Heart right ventricle (tissue), 16 donors: ENCODE measurements at regions of chr1 and their contacts with region 1.

Region 1: GRCh38 chr1:206635080-206635977 is at the start of gene DYRK3:
- DNase-seq: peak; percentile 94 to 97
- ATAC-seq: peak; percentile 98 to 99 (median 98)
- H3K4me3 ChIP-seq: peak within 1 kb of the TSS; percentile 77 to 98 (median 94)
- H3K27ac ChIP-seq: peak within 1 kb of the TSS; percentile 66 to 94 (median 89)
- H3K4me1 ChIP-seq: peaks cover 0 to 62% (median 30%) of the 10 kb centered on the region in 9 donors
- H3K27me3 ChIP-seq: peaks cover 0 to 10% (median 0%) of the 10 kb centered on the region in 7 donors
- CTCF ChIP-seq: peak in 2 of 9 donors; percentile 40
- total RNA-seq, gene DYRK3: 10.4 to 27.9 (median 20.8) TPM

Region 2: GRCh38 chr1:206663832-206664652 is 28.7 kb after region 1 on chr1:
- intact Hi-C with region 1: loop called in 9 of 10 experiments (anchors 1 to 5 kb)
- DNase-seq: peak; percentile 63 to 77
- ATAC-seq: peak; percentile 64 to 80 (median 77)
- H3K4me3 ChIP-seq: peak overlapping the region in 7 of 10 donors; percentile 6 to 39 (median 29)
- H3K27ac ChIP-seq: peak overlapping the region; percentile 71 to 96 (median 90)
- H3K4me1 ChIP-seq: peaks cover 3 to 76% (median 44%) of the 10 kb centered on the region in 9 donors
- H3K27me3 ChIP-seq: peaks cover 0 to 7% (median 0%) of the 10 kb centered on the region in 7 donors
- CTCF ChIP-seq: peak; percentile 78 to 89 (median 85)

Region 3: DNA sequence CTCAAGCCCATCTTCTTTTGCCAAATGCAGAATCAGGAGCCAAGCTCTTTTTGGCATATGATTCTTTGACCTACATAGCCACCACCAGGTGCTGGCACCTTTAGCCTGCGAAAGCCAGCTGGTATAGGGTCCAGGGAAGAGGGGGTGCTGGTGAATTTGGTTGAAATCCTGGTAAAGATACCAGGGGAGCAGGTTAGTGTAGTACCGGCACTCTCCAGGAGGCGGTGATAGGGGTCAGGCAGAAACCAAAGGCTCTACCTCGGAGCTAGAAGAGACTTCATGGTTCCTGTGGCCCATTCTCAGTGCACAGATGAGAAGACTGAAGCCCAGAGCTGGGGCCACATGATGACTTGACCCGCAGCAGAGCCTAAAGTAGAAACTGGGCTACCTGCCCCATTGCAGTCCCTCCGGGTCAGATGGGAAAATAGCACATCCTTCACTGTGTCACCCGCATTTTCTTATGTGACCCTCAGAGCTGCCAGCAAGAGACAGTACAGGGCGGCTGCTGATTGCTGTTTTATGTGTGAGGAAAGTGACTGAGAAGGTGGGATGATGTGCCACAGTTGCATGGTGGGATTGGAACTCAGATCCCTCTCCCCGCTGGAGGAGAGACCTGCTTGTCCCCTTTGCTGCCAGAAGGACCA is 99.3 kb after region 1 on chr1:
- intact Hi-C with region 1: loop called in 6 of 10 experiments (anchors 5 to 10 kb)
- DNase-seq: peak in 1 of 2 donors; percentile 37
- ATAC-seq: peak in 5 of 8 donors; percentile 14 to 31 (median 24)
- H3K4me3 ChIP-seq: no peak overlapping the region
- H3K27ac ChIP-seq: peak overlapping the region in 1 of 10 donors; percentile 70
- H3K4me1 ChIP-seq: peaks cover 10 to 65% (median 44%) of the 10 kb centered on the region in 9 donors
- H3K27me3 ChIP-seq: no peaks in the 10 kb centered on the region
- CTCF ChIP-seq: peak; percentile 42 to 79 (median 65)

Region 4: DNA sequence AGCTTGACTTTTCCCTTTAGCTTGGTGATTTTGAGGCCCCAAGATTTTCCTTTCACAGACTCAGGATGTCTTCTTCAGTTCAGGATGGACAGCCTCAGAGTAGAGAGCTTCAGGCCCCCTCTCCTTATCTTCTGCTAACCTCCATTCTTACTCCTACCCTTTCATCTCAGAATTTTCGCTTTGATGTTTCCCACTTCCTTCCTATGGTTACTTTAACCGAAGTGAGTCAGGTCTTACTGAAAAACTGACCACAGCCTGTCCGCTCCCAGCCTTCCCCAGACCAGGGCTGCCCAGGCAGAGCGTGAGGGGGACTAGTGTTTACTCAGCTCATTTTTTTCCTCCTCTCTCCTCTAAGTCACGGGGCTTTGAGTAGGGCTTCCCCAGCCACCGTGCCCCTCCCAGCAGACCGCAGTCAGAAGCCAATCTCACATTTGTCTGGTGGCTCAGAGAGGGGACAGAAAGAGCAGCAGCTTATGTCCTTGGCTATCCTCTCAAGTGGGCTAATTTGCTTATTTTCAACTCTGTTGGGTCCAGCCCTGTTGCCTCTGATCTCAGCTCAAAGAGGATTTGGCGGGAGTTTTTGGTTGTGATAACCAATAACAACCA is 131.0 kb after region 1 on chr1:
- intact Hi-C with region 1: no loop called
- DNase-seq: peak; percentile 11 to 23
- ATAC-seq: peak in 7 of 8 donors; percentile 52 to 79 (median 72)
- H3K4me3 ChIP-seq: no peak overlapping the region
- H3K27ac ChIP-seq: peak overlapping the region in 1 of 10 donors; percentile 28
- H3K4me1 ChIP-seq: peaks cover 0 to 63% (median 0%) of the 10 kb centered on the region in 9 donors
- H3K27me3 ChIP-seq: peaks cover 0 to 11% (median 0%) of the 10 kb centered on the region in 7 donors
- CTCF ChIP-seq: no peak

Region 5: DNA sequence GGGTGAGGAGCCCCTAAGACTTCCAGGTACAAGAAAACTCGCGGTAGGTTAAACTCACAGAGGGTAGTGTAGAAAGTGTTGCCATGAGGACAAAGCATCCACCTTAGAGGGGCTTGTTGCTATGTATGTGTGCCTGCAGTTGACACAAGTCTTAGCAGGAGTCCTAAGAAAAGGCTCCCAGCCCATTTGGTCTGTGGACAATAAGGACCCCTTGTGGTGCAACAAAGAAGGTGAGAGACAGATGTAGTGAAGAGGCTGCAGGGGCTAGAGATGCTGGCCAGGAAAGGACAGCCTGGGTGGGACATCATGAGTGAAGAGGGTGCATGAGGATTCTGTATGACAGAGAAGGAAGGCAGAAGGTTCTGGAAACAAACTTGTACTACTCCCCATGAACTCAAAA is 173.3 kb after region 1 on chr1:
- intact Hi-C with region 1: loop called in 9 of 10 experiments (anchors 2 to 5 kb)
- DNase-seq: peak in 1 of 2 donors; percentile 34
- ATAC-seq: peak in 7 of 8 donors; percentile 68 to 85 (median 75)
- H3K4me3 ChIP-seq: no peak overlapping the region
- H3K27ac ChIP-seq: no peak overlapping the region
- H3K4me1 ChIP-seq: peaks cover 0 to 17% (median 0%) of the 10 kb centered on the region in 9 donors
- H3K27me3 ChIP-seq: peaks cover 0 to 4% (median 0%) of the 10 kb centered on the region in 7 donors
- CTCF ChIP-seq: peak in 8 of 9 donors; percentile 21 to 56 (median 48)

Region 6: GRCh38 chr1:206982216-206982615 is 346.9 kb after region 1 on chr1:
- intact Hi-C with region 1: loop called in 5 of 10 experiments (anchors 2 to 10 kb)
- DNase-seq: peak; percentile 24 to 45
- ATAC-seq: peak; percentile 49 to 87 (median 74)
- H3K4me3 ChIP-seq: no peak overlapping the region
- H3K27ac ChIP-seq: no peak overlapping the region
- H3K4me1 ChIP-seq: no peaks in the 10 kb centered on the region
- H3K27me3 ChIP-seq: peaks cover 0 to 27% (median 4%) of the 10 kb centered on the region in 7 donors
- CTCF ChIP-seq: peak; percentile 16 to 68 (median 57)

Region 7: GRCh38 chr1:207058878-207059867 is 423.8 kb after region 1 on chr1:
- intact Hi-C with region 1: no loop called
- DNase-seq: no peak
- ATAC-seq: peak in 3 of 8 donors; percentile 12 to 63 (median 29)
- H3K4me3 ChIP-seq: no peak overlapping the region
- H3K27ac ChIP-seq: peak overlapping the region; percentile 20 to 93 (median 54)
- H3K4me1 ChIP-seq: peaks cover 5 to 71% (median 27%) of the 10 kb centered on the region in 9 donors
- H3K27me3 ChIP-seq: no peaks in the 10 kb centered on the region
- CTCF ChIP-seq: no peak